GM12878 (cell line): ENCODE measurements at regions of chr12 and their contacts with region 1.

Region 1: DNA sequence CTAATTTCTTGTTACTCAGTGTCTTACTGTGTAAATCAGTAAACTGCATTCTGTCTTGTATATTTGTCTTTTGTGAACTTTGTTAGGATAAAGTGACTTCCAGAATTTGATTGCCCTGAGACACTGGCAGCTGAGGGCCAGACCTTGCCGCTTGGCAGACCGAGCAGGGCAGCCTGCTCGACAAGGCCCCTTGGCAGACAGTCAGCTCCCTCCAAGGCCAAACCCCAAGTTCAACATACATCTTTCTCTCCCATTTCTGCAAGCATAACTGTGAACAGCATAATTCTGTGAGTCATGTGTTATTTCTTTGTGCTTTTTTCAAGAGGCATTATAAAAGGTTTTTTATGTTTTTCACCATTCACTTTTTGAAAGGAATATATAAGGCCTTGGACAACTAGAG is 39.2 kb upstream of the BMAL2 start:
- DNase-seq: no peak
- ATAC-seq: no peak
- H3K4me3 ChIP-seq: no peak overlapping the region
- H3K27ac ChIP-seq: no peak overlapping the region
- H3K4me1 ChIP-seq: peaks cover 18% of the 10 kb centered on the region
- H3K27me3 ChIP-seq: no peaks in the 10 kb centered on the region
- CTCF ChIP-seq: no peak
- EP300 ChIP-seq: no peak
- POLR2A ChIP-seq: no peak
- RAD21 ChIP-seq: no peak

Region 2: GRCh38 chr12:26953447-26953846 is 340.0 kb before region 1 on chr12:
- CTCF ChIA-PET with region 1: no interaction called
- POLR2A ChIA-PET with region 1: no interaction called
- RAD21 ChIA-PET with region 1: no interaction called
- SMC1A ChIA-PET with region 1: no interaction called
- in situ Hi-C with region 1: no loop called
- intact Hi-C with region 1: no loop called
- DNase-seq: no peak
- ATAC-seq: peak; percentile 46
- H3K4me3 ChIP-seq: no peak overlapping the region
- H3K27ac ChIP-seq: no peak overlapping the region
- H3K4me1 ChIP-seq: no peaks in the 10 kb centered on the region
- H3K27me3 ChIP-seq: no peaks in the 10 kb centered on the region
- CTCF ChIP-seq: no peak
- EP300 ChIP-seq: no peak
- POLR2A ChIP-seq: no peak
- RAD21 ChIP-seq: no peak

Region 3: GRCh38 chr12:27272701-27273028 is 20.8 kb before region 1 on chr12:
- CTCF ChIA-PET with region 1: interaction called, 5 read pairs
- POLR2A ChIA-PET with region 1: interaction called, 23 read pairs
- RAD21 ChIA-PET with region 1: interaction called, 24 read pairs
- SMC1A ChIA-PET with region 1: interaction called, 77 read pairs
- in situ Hi-C with region 1: no loop called
- intact Hi-C with region 1: no loop called
- DNase-seq: no peak
- ATAC-seq: peak; percentile 69
- H3K4me3 ChIP-seq: no peak overlapping the region
- H3K27ac ChIP-seq: no peak overlapping the region
- H3K4me1 ChIP-seq: peaks cover 16% of the 10 kb centered on the region
- H3K27me3 ChIP-seq: no peaks in the 10 kb centered on the region
- CTCF ChIP-seq: no peak
- EP300 ChIP-seq: peak in 1 of 2 experiments; percentile 34; a peak in 1 of 4 replicates
- POLR2A ChIP-seq: no peak
- RAD21 ChIP-seq: no peak

Region 4: DNA sequence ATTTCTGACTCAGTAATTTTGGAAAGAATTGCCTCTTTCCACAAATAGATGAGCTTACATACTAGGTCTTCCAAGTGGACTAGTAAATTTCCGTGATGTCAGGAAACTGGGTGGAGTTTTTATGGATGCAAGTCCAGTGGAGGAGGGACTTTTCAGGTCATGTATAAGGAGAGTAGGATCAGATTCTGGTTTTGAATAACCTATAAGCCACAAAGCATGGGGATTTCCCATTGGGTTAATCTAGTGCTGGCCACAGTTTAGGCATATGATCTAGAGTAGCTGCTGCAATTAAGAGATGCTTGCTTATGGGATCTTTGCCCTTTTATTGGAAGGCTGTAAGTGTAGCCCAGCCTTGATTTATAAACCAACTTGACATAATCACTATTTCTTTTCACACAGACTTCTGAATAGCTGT is 15.6 kb before region 1 on chr12:
- CTCF ChIA-PET with region 1: interaction called, 4 read pairs
- POLR2A ChIA-PET with region 1: interaction called, 23 read pairs
- RAD21 ChIA-PET with region 1: interaction called, 24 read pairs
- SMC1A ChIA-PET with region 1: interaction called, 77 read pairs
- in situ Hi-C with region 1: no loop called
- intact Hi-C with region 1: no loop called
- DNase-seq: peak; percentile 73
- ATAC-seq: peak; percentile 91
- H3K4me3 ChIP-seq: no peak overlapping the region
- H3K27ac ChIP-seq: peak overlapping the region; percentile 61; the same call in 1 of the 2 replicates
- H3K4me1 ChIP-seq: peaks cover 22% of the 10 kb centered on the region
- H3K27me3 ChIP-seq: no peaks in the 10 kb centered on the region
- CTCF ChIP-seq: no peak
- EP300 ChIP-seq: peak; percentile 64 to 71; a peak in 3 of 4 replicates
- POLR2A ChIP-seq: no peak
- RAD21 ChIP-seq: no peak